GM10248 (cell line): ENCODE measurements at regions of chr6 and their contacts with region 1.

Region 1: DNA sequence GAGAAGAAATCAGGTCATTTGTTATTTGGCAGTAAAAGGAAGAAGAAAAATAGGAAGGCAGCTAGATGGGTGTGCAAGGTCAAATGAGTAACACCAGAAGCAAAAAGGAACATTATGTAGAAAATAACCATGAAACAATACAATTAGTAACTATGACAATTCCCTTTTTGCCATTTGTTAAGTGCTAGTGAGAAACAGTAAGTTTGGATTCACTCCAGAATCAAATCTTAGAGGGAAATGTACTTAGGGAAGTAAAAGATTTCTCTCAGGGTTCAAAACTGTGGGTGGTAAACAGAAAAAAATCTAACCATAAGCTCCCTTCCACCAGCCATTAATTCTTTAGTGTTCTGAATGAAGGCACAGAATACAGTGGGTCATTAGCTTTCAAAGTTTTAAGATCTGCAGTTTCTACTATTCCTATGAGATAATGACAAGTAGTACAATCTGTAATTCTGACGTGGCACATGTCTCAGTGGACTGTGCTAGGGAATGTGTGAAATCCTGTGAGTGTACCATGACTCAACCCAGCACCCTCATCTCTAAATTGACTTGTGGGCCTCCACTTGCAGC is 17.1 kb downstream of the REPS1 start:
- DNase-seq: no peak
- CTCF ChIP-seq: no peak

Region 2: DNA sequence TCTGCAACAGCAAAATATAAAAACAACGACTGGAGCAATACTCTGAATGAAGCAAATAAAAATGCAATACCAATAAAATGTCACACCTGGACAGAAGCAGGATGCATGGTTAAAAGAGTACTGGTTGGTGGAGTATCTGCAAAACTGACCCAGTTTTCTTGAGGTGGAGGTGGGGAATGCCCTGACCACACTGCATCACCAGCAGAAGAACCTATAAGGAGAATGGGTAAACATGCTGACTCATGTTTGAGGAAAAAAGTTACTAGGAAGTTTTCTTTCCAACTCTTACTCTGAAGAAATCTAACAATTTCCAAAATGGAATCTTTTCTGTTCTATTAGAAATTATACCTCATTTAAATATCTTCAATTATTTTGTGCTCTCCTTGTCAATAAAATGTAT is 26.5 kb before region 1 on chr6:
- CTCF ChIA-PET with region 1: interaction called, 12 read pairs
- POLR2A ChIA-PET with region 1: no interaction called
- DNase-seq: peak; percentile 15
- CTCF ChIP-seq: no peak

Region 3: DNA sequence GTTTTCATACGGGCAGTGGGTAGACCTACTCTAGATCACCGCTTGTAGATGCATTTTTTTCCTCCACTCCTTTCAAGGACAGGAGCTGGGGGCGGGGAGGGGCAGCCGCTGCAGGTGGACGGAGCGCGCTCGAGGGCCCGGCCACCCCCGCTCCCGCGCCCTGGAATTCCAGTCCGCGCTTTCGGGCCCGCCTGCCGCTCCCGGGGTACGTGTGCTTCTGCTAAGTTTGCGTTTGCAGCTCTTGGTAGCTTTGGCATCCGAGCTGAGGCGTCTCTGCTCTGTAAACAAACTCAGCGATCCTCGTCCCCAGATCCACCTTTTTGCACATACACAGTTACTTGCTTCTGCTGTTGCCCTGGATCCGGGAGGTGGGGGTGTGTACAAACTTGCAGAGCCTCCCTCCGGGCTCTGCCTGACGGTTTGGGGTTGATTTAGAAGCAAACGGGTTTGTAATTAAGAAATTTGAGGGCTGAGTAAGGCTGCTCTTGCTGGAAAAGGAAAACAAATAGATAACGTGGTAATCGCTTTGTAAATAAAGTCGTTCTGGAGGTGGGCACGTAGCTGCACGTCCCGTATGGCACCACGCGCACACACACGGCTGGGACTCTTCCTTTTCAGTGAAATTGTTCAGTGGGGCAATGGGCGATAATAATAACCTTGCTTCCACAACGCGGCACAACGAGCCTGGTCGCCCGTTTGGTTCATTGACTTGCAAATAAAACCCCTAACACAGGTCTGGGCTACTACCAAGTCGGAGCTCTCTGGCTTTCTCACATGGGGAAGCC is 404.5 kb after region 1 on chr6:
- CTCF ChIA-PET with region 1: no interaction called
- POLR2A ChIA-PET with region 1: no interaction called
- DNase-seq: peak; percentile 80
- CTCF ChIP-seq: no peak

Region 4: DNA sequence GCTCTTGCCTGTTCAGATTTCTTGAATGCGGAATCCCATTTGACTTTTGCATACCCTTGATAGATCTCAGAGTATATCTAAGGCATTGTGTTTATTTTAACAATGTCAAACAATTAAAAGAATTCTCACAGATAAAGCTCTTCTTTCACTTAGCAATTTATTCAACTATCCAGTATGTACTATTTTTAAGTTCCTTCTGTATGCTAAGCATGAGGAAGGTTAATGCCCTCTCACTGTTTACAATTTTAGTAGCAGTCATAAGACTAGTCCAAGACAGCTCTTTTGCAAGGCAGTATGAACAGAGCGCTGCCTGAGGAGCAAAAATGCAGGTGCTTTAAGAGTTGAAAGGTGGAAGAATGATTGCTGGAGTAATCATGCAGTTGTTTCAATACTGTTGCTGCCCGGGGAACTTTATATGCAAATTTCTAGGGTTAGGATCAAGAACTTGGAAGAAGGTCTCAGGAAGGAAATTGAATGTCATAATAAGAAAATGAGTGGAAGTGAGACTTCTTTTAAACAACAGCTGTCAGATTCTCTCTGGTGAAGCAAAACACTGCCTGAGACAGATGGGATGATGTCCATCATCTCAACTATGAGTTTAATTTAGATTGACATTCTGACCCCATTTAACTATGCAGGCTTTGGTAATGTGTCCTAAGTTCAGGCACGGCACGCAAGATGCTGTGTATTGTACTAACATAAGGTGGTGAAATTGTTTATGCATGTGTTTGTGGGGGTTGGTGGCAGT is 1707.0 kb after region 1 on chr6:
- CTCF ChIA-PET with region 1: no interaction called
- POLR2A ChIA-PET with region 1: no interaction called
- DNase-seq: no peak
- CTCF ChIP-seq: no peak